ENCODE measurements at regions of chr14 and their contacts with region 1.

Region 1: GRCh38 chr14:74860906-74861733 is 14.8 kb downstream of the PROX2 start:
- DNase-seq: peak; percentile 90
- H3K4me3 ChIP-seq: no peak overlapping the region
- H3K27ac ChIP-seq: no peak overlapping the region
- H3K4me1 ChIP-seq: peaks cover 4% of the 10 kb centered on the region
- H3K27me3 ChIP-seq: no peaks in the 10 kb centered on the region
- CTCF ChIP-seq: peak; percentile 89

Region 2: GRCh38 chr14:74552623-74553022 is 308.5 kb before region 1 on chr14:
- CTCF ChIA-PET with region 1: no interaction called
- POLR2A ChIA-PET with region 1: no interaction called
- intact Hi-C with region 1: no loop called
- DNase-seq: no peak
- H3K4me3 ChIP-seq: no peak overlapping the region
- H3K27ac ChIP-seq: no peak overlapping the region
- H3K4me1 ChIP-seq: no peaks in the 10 kb centered on the region
- H3K27me3 ChIP-seq: no peaks in the 10 kb centered on the region
- CTCF ChIP-seq: no peak

Region 3: DNA sequence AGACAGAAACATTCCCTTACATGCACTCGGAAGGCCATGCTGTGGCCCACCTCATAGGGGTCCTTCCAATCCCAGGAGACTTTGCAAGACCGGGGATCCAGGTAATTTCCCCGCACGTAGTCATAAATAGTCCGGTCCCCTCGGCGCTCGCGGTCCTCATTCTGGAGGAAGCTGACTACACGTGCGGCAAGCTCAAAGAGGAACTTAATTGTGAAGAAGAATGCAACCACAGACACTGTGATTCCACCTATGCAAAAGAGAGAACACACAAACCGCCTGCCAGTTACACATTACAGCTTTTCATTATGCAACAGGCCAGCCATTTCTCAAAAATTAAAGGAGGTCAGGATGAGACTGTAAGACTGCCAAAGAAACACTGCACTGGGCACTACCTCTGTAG is 176.7 kb before region 1 on chr14:
- CTCF ChIA-PET with region 1: no interaction called
- POLR2A ChIA-PET with region 1: no interaction called
- intact Hi-C with region 1: no loop called
- DNase-seq: no peak
- H3K4me3 ChIP-seq: no peak overlapping the region
- H3K27ac ChIP-seq: no peak overlapping the region
- H3K4me1 ChIP-seq: no peaks in the 10 kb centered on the region
- H3K27me3 ChIP-seq: no peaks in the 10 kb centered on the region
- CTCF ChIP-seq: no peak

Region 4: DNA sequence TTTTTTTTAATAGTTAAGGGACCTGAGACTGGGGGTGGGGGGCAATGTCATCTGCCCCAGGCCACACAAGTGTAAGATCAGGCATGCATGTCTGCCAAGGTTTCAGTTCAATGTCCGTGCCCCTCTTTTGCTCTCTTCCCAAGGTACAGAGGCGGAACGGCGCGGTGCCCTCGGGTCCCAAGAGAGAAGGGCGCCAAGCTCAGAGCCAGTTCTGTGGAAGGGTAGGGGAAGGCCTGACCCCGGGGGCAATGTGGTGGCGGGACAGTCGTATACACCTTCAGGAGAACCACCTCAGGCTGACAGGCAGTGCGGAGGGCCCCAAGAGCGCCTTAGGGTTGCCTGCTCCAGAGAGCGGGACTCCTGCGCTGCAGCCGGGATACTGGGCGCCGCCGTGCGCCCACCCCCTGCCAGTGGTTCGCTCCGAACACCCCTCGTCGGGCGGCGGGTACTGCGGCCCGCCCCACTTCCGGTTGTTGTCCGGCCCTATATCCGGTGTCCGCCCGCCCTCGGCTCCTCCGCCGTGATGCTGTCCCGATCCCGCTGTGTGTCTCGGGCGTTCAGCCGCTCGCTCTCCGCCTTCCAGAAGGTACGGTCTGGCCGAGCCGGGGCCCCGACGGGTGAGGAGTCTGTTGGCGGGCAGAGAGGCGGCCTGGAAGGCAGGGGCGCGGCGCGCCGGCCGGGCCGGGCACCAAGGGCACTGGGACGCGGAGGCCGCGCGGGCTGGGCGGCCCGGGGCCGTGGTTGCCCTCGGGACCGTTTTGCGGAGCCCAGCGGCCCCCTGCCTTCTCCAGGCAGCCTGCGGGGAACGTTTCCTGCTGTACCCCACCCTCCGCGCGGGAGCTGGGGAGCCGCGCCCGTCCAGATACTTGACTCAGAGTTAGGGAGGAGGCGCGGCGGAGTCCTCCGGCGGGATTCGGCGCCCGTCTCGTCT is 20.6 kb after region 1 on chr14 and contains the start of gene DLST:
- CTCF ChIA-PET with region 1: interaction called, 16 read pairs
- POLR2A ChIA-PET with region 1: no interaction called
- intact Hi-C with region 1: no loop called
- DNase-seq: peak; percentile 94
- H3K4me3 ChIP-seq: peak within 1 kb of the TSS; percentile 98
- H3K27ac ChIP-seq: peak within 1 kb of the TSS; percentile 96
- H3K4me1 ChIP-seq: peaks cover 12% of the 10 kb centered on the region
- H3K27me3 ChIP-seq: no peaks in the 10 kb centered on the region
- CTCF ChIP-seq: no peak
- total RNA-seq, gene DLST: 139 and 145 TPM in 2 replicates

Region 5: DNA sequence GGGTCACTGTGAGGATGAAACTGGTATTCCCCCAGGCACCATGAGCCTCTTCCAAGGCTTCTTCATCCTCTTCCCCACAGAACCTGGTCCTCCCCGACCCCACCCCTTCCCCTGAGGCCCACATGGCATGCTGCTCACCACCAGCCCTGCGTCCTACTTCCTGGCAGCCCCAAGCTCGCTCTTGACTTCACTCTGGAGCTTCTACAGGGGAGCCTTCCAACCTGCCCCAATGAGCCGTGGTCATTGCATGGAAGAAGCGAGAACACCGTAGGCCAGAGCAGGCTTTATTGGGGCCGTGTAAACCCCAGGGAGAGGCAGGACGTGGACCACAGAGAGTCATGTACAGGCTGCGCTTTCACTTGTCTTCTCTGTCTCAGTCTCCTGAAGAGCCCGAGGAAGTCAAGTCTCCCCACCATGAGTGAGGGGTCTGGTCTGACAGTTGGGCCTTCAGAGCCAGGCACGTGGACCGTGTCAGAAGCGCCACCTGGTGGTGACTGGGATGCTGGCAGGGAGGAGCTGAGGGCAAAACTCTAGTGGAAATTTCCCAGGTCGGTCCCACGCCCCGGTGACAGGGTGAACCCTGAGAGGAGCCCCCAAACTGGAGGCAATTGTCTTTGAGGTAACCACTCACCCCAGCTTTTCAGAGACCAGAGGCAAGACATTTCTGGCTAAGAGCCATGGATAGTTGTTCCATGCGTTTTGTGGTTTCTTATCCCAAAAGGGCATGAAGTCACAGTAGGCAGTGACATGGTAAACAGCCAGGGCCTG is 44.4 kb after region 1 on chr14:
- CTCF ChIA-PET with region 1: interaction called, 26 read pairs
- POLR2A ChIA-PET with region 1: no interaction called
- intact Hi-C with region 1: loop called (anchors 1 kb)
- DNase-seq: peak; percentile 75
- H3K4me3 ChIP-seq: no peak overlapping the region
- H3K27ac ChIP-seq: no peak overlapping the region
- H3K4me1 ChIP-seq: no peaks in the 10 kb centered on the region
- H3K27me3 ChIP-seq: no peaks in the 10 kb centered on the region
- CTCF ChIP-seq: peak; percentile 99